Mammary epithelial cell (primary cell): ENCODE measurements at regions of chr6 and their contacts with region 1.

Region 1: GRCh38 chr6:115896538-115897129 is 164.1 kb downstream of the FRK start:
- DNase-seq: peak; percentile 19
- H3K4me3 ChIP-seq: no peak overlapping the region
- H3K27ac ChIP-seq: no peak overlapping the region
- H3K4me1 ChIP-seq: no peaks in the 10 kb centered on the region
- H3K27me3 ChIP-seq: no peaks in the 10 kb centered on the region
- CTCF ChIP-seq: peak; percentile 84 to 85

Region 2: GRCh38 chr6:114747987-114748630 is 1148.5 kb before region 1 on chr6:
- CTCF ChIA-PET with region 1: no interaction called
- dilution Hi-C with region 1: no loop called
- in situ Hi-C with region 1: loop called (anchors 10 to 25 kb)
- intact Hi-C with region 1: loop called (anchors 1 kb)
- DNase-seq: peak; percentile 25
- H3K4me3 ChIP-seq: no peak overlapping the region
- H3K27ac ChIP-seq: no peak overlapping the region
- H3K4me1 ChIP-seq: no peaks in the 10 kb centered on the region
- H3K27me3 ChIP-seq: no peaks in the 10 kb centered on the region
- CTCF ChIP-seq: peak; percentile 75 to 78

Region 3: GRCh38 chr6:115969207-115969929 is 72.7 kb after region 1 on chr6:
- CTCF ChIA-PET with region 1: no interaction called
- dilution Hi-C with region 1: no loop called
- in situ Hi-C with region 1: no loop called
- intact Hi-C with region 1: no loop called
- DNase-seq: no peak
- H3K4me3 ChIP-seq: no peak overlapping the region
- H3K27ac ChIP-seq: no peak overlapping the region
- H3K4me1 ChIP-seq: peaks cover 7% of the 10 kb centered on the region
- H3K27me3 ChIP-seq: no peaks in the 10 kb centered on the region
- CTCF ChIP-seq: no peak